ENCODE measurements at regions of chr6 and their contacts with region 1.

Region 1: DNA sequence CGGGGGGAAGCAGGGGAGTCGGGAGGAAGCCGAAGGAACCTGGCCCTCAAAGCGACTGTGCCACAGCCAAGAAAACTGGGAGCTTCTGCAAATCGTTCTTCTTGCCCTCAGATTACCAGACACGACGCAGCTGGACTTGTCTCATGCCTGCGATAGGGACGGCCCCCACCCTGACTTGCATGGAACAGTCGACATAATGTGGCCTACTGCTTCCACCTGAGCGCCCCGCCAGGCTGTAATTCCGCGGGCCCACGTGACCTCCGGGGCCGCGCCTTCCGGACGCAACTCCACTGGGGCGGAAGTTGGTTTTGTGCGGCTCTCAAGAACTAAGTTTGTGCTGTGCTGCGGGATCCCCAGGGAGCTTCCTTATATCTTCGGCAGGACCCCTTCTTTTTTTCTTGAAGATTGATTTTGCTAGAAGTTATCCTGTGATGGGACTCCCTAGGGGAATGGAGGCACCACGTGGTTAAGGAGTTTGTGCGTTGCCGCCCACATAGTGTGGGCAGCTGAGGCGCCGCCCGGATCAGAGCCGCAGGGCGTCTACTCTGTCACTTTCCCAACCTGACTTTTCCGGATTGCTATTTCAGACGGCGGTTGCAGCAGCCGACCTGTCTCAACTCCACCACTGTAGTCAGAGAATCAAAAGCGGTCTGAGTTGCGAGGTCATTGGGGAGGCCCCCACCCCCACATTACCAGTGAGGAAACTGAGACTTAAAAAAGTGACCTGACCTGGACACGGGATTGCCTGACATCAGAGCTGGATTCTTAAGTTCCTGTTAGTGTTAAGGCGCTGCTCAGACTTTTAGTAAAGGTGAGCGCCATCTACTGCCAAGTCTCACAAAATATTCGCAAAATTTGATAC is 540 bp upstream of the CD164 start:
- DNase-seq: peak; percentile 80 to 92 (median 86)
- H3K4me3 ChIP-seq: peak overlapping the region; percentile 74 to 100 (median 94)
- H3K27ac ChIP-seq: peak overlapping the region; percentile 94 to 100 (median 99)
- H3K27me3 ChIP-seq: no peaks in the 10 kb centered on the region
- CTCF ChIP-seq: peak; percentile 54 to 84 (median 74)

Region 2: GRCh38 chr6:109095027-109095834 is 287.6 kb before region 1 on chr6 and contains the start of gene CEP57L1:
- intact Hi-C with region 1: loop called (anchors 1 to 2 kb)
- DNase-seq: peak; percentile 92 to 98 (median 96)
- H3K4me3 ChIP-seq: peak within 1 kb of the TSS; percentile 58 to 99 (median 86)
- H3K27ac ChIP-seq: peak within 1 kb of the TSS; percentile 89 to 100 (median 98)
- H3K27me3 ChIP-seq: no peaks in the 10 kb centered on the region
- CTCF ChIP-seq: peak in 20 of 56 donors; percentile 4 to 46 (median 18)
- total RNA-seq, gene CEP57L1: 14.7 to 38.7 (median 24.8) TPM

Region 3: GRCh38 chr6:109187399-109188114 is 195.2 kb before region 1 on chr6:
- intact Hi-C with region 1: loop called (anchors 1 to 2 kb)
- DNase-seq: peak in 9 of 10 donors; percentile 34 to 63 (median 55)
- H3K4me3 ChIP-seq: peak overlapping the region in 25 of 59 donors; percentile 2 to 42 (median 15)
- H3K27ac ChIP-seq: peak overlapping the region in 9 of 59 donors; percentile 5 to 46 (median 33)
- H3K27me3 ChIP-seq: peaks cover 0 to 18% (median 0%) of the 10 kb centered on the region in 45 donors
- CTCF ChIP-seq: peak; percentile 69 to 98 (median 94)

Region 4: DNA sequence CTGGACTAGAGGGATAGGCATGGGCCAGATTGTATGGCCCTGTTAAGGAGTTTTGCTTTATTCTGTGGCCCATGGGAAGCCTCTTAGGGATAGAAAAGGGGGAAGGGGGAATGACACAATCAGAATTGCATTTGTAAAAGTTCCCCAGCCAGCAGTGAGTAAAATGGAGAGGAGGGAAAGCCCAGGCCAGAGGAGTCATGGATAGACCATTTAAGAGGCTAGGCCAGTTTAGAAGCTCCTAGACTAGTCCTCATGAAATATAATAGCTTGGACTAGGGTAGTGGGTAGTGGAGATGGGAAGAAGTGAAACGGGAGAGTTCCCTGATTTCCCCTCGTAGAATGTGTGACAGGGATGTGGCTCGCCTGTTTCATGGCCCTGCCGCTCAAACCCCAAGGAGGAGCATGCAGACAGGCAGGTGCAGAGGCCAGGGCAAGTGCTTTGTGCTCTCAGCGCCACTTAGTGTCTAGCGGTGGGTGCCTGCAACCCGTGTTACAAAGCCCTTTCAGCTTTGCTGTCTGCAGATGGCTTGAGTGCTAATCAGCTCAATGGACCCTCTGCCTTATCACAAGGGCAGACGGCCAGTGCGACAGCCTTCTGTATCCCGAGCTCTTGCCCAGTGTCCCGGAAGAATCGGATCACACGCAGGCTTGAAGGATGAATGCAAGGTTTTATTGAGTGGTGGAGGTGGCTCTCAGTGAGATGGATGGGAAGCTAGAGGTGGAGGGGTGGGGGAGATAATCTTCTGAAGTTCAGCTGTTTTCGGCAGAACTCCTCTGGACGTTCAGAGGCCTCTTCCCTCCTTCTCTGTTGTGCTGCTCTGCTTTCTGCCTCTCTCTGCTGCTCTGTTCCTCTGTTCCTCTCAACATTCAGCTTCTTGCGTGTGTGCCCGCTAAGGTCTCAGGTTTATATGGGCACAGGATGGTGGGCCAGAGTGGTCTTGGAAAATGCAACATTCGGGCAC is 146.4 kb before region 1 on chr6:
- intact Hi-C with region 1: loop called (anchors 2 to 5 kb)
- DNase-seq: peak in 9 of 10 donors; percentile 27 to 66 (median 53)
- H3K4me3 ChIP-seq: peak overlapping the region in 1 of 59 donors; percentile 3
- H3K27ac ChIP-seq: peak overlapping the region in 8 of 59 donors; percentile 7 to 35 (median 16)
- H3K27me3 ChIP-seq: no peaks in the 10 kb centered on the region
- CTCF ChIP-seq: peak in 40 of 56 donors; percentile 14 to 69 (median 40)

Region 5: DNA sequence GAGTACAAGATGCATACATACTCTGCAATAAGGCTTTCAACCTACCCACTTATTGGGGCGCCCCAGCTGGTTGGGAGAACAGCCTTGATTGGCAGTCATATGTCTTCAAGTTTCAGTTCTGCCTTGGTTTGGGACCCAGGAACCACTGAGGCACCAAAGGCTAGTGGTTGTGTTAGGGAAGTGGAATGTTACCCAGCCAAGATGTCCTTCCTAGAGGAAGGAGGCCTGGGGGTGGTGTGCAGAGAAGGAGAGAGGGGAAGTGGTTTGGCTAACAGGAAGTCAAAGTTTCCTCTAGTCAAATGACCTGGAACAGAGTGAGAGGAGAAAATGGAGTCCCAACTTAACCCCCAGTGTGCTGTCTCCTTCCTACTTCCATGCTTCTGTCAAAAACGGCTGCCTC is 60.0 kb before region 1 on chr6:
- intact Hi-C with region 1: loop called (anchors 1 to 5 kb)
- DNase-seq: no peak
- H3K4me3 ChIP-seq: no peak overlapping the region
- H3K27ac ChIP-seq: peak overlapping the region in 1 of 59 donors; percentile 1
- H3K27me3 ChIP-seq: no peaks in the 10 kb centered on the region
- CTCF ChIP-seq: no peak

Region 6: DNA sequence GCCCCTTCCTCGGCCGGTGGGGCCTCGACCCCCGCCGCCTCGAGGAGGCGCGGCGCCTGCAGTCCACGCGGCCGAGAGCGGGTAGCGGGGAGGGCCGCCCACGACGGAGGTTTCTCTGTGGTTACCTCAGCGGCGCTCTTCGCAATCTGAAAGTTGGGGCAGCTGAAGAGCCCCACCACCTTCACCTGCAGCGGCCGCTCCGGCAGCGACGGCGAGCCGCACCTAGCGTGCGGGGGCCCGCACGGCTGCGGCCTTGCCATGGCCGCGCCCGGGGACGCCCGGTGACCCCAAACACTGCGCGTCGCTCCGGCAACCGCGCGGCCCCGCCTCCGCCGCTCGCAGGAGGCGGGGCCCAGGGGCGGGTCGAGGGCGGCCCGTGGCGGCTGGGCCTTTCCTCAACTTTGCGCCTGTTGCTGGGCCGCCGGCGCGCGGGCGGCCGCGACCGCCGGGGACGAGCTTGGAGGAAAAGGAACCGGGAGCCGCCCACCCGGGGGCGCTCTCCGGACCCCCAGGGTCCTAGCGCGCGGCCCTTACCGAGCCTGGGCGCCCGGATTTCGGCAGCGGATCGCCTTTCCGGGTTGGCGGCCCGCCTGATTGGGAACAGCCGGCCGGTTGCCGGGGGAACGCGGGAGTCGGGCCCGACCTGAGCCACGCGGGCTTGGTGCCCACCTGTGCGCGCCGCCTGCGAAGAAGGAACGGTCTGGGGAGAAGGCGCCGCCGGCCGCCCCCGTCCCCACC is 57.7 kb after region 1 on chr6 and contains the starts of genes PPIL6 and SMPD2:
- intact Hi-C with region 1: loop called (anchors 2 to 5 kb)
- DNase-seq: peak; percentile 66 to 87 (median 82)
- H3K4me3 ChIP-seq: peak within 1 kb of the TSS; percentile 70 to 98 (median 88)
- H3K27ac ChIP-seq: peak within 1 kb of the TSS in 57 of 59 donors; percentile 31 to 92 (median 81)
- H3K27me3 ChIP-seq: no peaks in the 10 kb centered on the region
- CTCF ChIP-seq: peak in 49 of 56 donors; percentile 17 to 77 (median 49)
- total RNA-seq, gene PPIL6: 5.2 to 18.3 (median 10.6) TPM
- total RNA-seq, gene SMPD2: 3.5 to 16.3 (median 7.9) TPM

Region 7: GRCh38 chr6:109482905-109483735 is 100.3 kb after region 1 on chr6 and contains the start of gene ZBTB24:
- intact Hi-C with region 1: loop called in 1 of 2 experiments (anchors 2 kb)
- DNase-seq: peak; percentile 76 to 95 (median 87)
- H3K4me3 ChIP-seq: peak within 1 kb of the TSS; percentile 67 to 100 (median 96)
- H3K27ac ChIP-seq: peak within 1 kb of the TSS in 53 of 59 donors; percentile 30 to 90 (median 78)
- H3K27me3 ChIP-seq: no peaks in the 10 kb centered on the region
- CTCF ChIP-seq: peak in 9 of 56 donors; percentile 13 to 40 (median 21)
- total RNA-seq, gene ZBTB24: 5.4 to 12.6 (median 10.0) TPM

Measured in dorsolateral prefrontal cortex (tissue), 120 donors.